Activated naive CD8-positive, alpha-beta T cell treated with anti-CD3 and anti-CD28 coated beads, Interleukin-2, amount 10 ng/mL, durations not matched to agents 7 days and 5 days (primary cell): ENCODE measurements at regions of chr4 and their contacts with region 1.

Region 1: DNA sequence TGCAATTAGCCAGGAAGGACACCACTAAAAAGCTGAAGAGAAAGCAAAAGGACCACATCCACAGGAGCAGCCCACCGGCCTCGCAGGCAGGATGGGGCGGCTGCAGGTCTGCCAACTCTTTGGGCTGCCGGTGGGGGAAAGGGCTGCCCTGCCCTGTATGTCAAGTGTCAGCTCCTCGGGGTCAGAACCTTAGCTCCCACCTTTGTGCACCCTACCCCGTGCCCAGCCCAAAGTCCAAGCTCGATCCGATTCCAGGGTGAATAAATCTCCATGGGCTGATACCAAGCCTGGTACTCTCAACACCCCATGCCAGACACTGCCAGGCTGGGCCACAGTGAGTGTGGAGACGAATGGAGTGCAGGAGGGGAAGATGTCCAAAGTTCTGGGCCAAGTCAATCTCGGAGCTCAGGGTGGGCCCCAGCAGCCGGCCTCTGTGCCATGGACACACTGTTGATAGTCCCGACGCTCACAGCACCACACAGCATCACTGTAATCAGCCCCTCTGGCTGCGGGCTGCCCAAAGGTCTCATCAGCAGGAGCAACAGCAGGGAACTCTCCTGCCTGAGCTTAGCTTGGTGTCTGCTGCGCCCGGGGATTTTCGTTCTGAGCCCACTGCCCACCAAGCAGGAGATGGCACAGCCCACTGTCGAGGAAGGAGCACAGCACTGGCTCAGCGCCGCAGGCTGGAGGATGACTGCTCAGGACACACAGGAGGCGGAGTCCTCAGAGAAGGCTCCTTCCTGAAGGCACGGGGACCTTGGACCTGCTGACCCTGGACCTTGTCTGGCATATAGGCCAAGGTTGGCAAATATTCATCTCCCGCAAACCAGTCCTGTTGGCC is 84.4 kb downstream of the JAKMIP1 start:
- DNase-seq: no peak
- ATAC-seq: no peak
- H3K4me3 Mint-ChIP-seq: no peak overlapping the region
- H3K27ac Mint-ChIP-seq: no peak overlapping the region
- H3K4me1 Mint-ChIP-seq: peaks cover 10% of the 10 kb centered on the region
- H3K27me3 Mint-ChIP-seq: peaks cover 10% of the 10 kb centered on the region

Region 2: GRCh38 chr4:6105311-6105911 is 10.6 kb before region 1 on chr4:
- POLR2A ChIA-PET with region 1: interaction called, 10 read pairs
- DNase-seq: no peak
- ATAC-seq: no peak
- H3K4me3 Mint-ChIP-seq: no peak overlapping the region
- H3K27ac Mint-ChIP-seq: no peak overlapping the region
- H3K4me1 Mint-ChIP-seq: no peaks in the 10 kb centered on the region
- H3K27me3 Mint-ChIP-seq: peaks cover 4% of the 10 kb centered on the region